Naive thymus-derived CD4-positive, alpha-beta T cell (primary cell): ENCODE measurements at regions of chr11 and their contacts with region 1.

Region 1: DNA sequence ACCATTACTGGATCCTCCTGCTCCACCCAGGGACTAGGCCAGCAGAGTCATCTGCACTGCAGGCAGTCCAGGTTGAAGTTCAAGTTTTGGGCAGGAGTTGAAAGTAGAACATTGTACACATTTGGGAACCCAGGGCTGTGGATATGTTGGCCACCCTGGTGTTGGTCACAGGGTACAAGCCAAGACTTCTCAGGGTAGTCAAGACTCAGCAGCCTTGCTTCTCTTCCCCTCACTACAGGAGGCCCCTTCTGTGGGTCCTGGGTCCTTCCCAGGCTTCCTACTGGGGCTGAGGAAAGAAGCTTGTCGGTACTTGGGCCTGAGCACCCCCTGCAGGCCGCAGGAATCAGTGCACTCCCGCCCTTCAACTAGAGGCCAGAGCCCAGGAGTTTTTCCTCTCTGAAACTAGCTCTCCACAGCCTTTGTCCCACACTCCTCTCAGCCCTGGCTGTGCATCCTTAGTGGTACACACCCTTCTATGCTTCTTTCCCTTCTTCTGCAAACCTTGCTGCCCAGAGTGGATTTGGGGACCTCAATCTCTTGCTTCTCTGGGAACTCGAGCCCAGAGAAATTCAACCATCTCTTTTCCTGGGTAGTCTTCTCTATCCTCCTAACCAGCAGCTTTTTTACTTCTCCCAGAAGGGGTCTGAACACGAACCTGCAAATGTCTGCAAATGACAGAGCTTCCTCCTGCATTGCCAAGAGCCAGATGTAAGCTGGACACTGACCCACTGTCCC is 2.6 kb upstream of the HPX start:
- DNase-seq: peak; percentile 28 to 67 (median 53)
- ATAC-seq: peak; percentile 87
- H3K4me3 ChIP-seq: no peak overlapping the region
- H3K4me3 Mint-ChIP-seq: no peak overlapping the region
- H3K27ac ChIP-seq: no peak overlapping the region
- H3K27ac Mint-ChIP-seq: no peak overlapping the region
- H3K4me1 ChIP-seq: peaks cover 12 to 19% of the 10 kb centered on the region in 2 donors
- H3K4me1 Mint-ChIP-seq: peaks cover 0 to 5% (median 0%) of the 10 kb centered on the region in 7 donors
- H3K27me3 ChIP-seq: no peaks in the 10 kb centered on the region
- H3K27me3 Mint-ChIP-seq: peaks cover 0 to 12% (median 0%) of the 10 kb centered on the region in 5 donors

Region 2: DNA sequence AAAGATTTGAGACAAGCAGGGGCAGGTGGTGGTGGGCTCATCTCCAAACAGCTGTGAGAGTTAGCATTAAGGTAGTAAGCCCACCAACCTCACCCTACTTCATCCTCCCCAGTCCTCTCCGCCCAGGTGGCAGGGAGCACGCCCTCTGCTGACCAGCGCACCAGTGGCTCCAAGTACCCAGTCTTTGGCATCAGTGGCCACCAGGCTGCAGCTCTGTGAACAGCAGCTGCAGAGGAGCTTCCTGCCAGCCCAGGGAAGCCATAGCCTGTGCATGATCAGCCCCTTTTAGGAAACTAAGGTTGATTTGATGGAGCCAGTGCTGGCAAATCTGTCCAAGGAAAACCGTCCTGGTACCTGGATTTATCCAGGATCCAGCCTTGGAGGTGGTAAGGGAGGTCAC is 144.8 kb before region 1 on chr11:
- CTCF ChIA-PET with region 1: no interaction called
- POLR2A ChIA-PET with region 1: no interaction called
- intact Hi-C with region 1: loop called in 1 of 2 experiments (anchors 5 kb)
- DNase-seq: no peak
- ATAC-seq: no peak
- H3K4me3 ChIP-seq: no peak overlapping the region
- H3K4me3 Mint-ChIP-seq: no peak overlapping the region
- H3K27ac ChIP-seq: no peak overlapping the region
- H3K27ac Mint-ChIP-seq: no peak overlapping the region
- H3K4me1 ChIP-seq: no peaks in the 10 kb centered on the region
- H3K4me1 Mint-ChIP-seq: no peaks in the 10 kb centered on the region
- H3K27me3 ChIP-seq: no peaks in the 10 kb centered on the region
- H3K27me3 Mint-ChIP-seq: peaks cover 8 to 30% (median 20%) of the 10 kb centered on the region in 5 donors

Region 3: DNA sequence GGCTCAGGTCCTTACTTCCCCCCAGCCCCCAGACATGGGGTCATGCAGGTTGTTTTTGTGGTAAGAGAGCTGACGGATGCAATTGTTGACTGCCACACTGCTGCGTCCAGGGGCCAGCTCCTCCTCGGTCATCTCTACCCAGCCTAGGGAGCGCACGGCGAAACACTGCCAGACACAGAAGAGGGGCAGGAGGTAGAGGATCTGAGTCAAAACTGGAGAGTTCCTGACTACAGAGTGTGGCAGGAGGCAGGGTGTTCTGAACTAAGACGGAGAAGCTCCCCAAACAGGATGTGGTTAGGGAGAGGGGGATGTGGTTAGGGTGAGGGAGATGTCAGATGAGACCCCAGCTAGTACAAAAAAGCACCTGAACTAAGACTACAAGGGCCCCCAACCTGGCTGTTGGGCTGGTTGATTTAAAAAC is 40.9 kb before region 1 on chr11:
- CTCF ChIA-PET with region 1: interaction called, 86 read pairs
- POLR2A ChIA-PET with region 1: interaction called, 26 read pairs
- intact Hi-C with region 1: loop called (anchors 1 kb)
- DNase-seq: peak in 8 of 9 donors; percentile 69 to 99 (median 97)
- ATAC-seq: peak; percentile 92
- H3K4me3 ChIP-seq: peak overlapping the region; percentile 52
- H3K4me3 Mint-ChIP-seq: peak overlapping the region; percentile 74 to 94 (median 90)
- H3K27ac ChIP-seq: peak overlapping the region; percentile 80
- H3K27ac Mint-ChIP-seq: peak overlapping the region; percentile 94 to 100 (median 97)
- H3K4me1 ChIP-seq: peaks cover 53 to 83% of the 10 kb centered on the region in 2 donors
- H3K4me1 Mint-ChIP-seq: peaks cover 63 to 100% (median 87%) of the 10 kb centered on the region in 7 donors
- H3K27me3 ChIP-seq: no peaks in the 10 kb centered on the region
- H3K27me3 Mint-ChIP-seq: peaks cover 0 to 5% (median 0%) of the 10 kb centered on the region in 5 donors

Region 4: DNA sequence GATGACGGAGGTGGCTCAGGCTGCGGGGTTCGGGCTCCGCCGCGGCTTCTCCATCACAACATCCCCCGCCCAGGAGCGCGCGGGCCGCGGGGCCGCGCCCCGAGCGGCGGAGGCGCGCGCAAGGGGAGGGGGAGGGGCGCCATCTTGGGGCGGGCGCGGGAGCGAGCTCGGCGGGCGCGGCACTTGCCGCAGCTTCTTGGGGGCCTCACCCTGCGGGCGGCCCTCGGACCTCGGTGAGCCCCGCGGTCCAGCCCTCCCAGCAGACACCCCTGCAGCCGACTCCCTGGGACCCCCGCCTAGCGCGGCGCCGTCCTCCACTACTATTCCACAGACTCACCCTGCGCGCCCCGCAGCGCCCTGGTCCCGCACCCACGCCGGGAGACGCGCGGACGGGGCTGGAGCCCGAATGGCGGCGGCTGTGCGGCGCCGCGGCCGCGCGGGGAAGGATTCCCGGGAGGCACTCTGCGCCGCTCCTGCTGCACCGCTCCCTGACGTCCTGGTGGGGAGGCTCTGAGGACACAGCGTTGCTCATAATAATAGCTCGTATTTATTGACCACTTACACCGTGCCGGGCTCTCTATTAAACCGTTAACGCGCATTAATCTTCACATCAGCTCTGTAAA is 24.3 kb before region 1 on chr11 and contains the start of gene APBB1:
- CTCF ChIA-PET with region 1: interaction called, 12 read pairs
- POLR2A ChIA-PET with region 1: interaction called, 16 read pairs
- intact Hi-C with region 1: loop called (anchors 1 to 2 kb)
- DNase-seq: peak; percentile 71 to 87 (median 81)
- ATAC-seq: peak; percentile 89
- H3K4me3 ChIP-seq: peak within 1 kb of the TSS; percentile 79
- H3K4me3 Mint-ChIP-seq: peak within 1 kb of the TSS in 7 of 10 donors; percentile 78 to 92 (median 85)
- H3K27ac ChIP-seq: peak within 1 kb of the TSS; percentile 92
- H3K27ac Mint-ChIP-seq: peak within 1 kb of the TSS; percentile 47 to 92 (median 89)
- H3K4me1 ChIP-seq: peaks cover 27 to 46% of the 10 kb centered on the region in 2 donors
- H3K4me1 Mint-ChIP-seq: peaks cover 2 to 18% (median 14%) of the 10 kb centered on the region in 7 donors
- H3K27me3 ChIP-seq: no peaks in the 10 kb centered on the region
- H3K27me3 Mint-ChIP-seq: peaks cover 0 to 36% (median 11%) of the 10 kb centered on the region in 5 donors
- total RNA-seq, gene APBB1: 46.9 to 188 (median 154) TPM

Region 5: GRCh38 chr11:6473481-6474422 is 30.3 kb after region 1 on chr11 and contains the start of gene TRIM3:
- CTCF ChIA-PET with region 1: interaction called, 8 read pairs
- POLR2A ChIA-PET with region 1: interaction called, 3 read pairs
- intact Hi-C with region 1: loop called in 1 of 2 experiments (anchors 5 kb)
- DNase-seq: peak; percentile 16 to 68 (median 44)
- ATAC-seq: peak; percentile 86
- H3K4me3 ChIP-seq: peak within 1 kb of the TSS; percentile 56
- H3K4me3 Mint-ChIP-seq: peak within 1 kb of the TSS; percentile 78 to 90 (median 86)
- H3K27ac ChIP-seq: peak within 1 kb of the TSS; percentile 71
- H3K27ac Mint-ChIP-seq: peak within 1 kb of the TSS; percentile 40 to 90 (median 88)
- H3K4me1 ChIP-seq: peaks cover 7 to 11% of the 10 kb centered on the region in 2 donors
- H3K4me1 Mint-ChIP-seq: peaks cover 12 to 31% (median 20%) of the 10 kb centered on the region in 7 donors
- H3K27me3 ChIP-seq: no peaks in the 10 kb centered on the region
- H3K27me3 Mint-ChIP-seq: peaks cover 0 to 10% (median 0%) of the 10 kb centered on the region in 5 donors
- total RNA-seq, gene TRIM3: 8.1 to 20.7 (median 17.2) TPM

Region 6: GRCh38 chr11:7222619-7223018 is 779.2 kb after region 1 on chr11:
- CTCF ChIA-PET with region 1: no interaction called
- POLR2A ChIA-PET with region 1: no interaction called
- intact Hi-C with region 1: no loop called
- DNase-seq: no peak
- ATAC-seq: no peak
- H3K4me3 ChIP-seq: no peak overlapping the region
- H3K4me3 Mint-ChIP-seq: no peak overlapping the region
- H3K27ac ChIP-seq: no peak overlapping the region
- H3K27ac Mint-ChIP-seq: no peak overlapping the region
- H3K4me1 ChIP-seq: no peaks in the 10 kb centered on the region
- H3K4me1 Mint-ChIP-seq: no peaks in the 10 kb centered on the region
- H3K27me3 ChIP-seq: no peaks in the 10 kb centered on the region
- H3K27me3 Mint-ChIP-seq: peaks cover 2 to 44% (median 31%) of the 10 kb centered on the region in 5 donors